OCI-LY7 (cell line): ENCODE measurements at regions of chr11 and their contacts with region 1.

Region 1: DNA sequence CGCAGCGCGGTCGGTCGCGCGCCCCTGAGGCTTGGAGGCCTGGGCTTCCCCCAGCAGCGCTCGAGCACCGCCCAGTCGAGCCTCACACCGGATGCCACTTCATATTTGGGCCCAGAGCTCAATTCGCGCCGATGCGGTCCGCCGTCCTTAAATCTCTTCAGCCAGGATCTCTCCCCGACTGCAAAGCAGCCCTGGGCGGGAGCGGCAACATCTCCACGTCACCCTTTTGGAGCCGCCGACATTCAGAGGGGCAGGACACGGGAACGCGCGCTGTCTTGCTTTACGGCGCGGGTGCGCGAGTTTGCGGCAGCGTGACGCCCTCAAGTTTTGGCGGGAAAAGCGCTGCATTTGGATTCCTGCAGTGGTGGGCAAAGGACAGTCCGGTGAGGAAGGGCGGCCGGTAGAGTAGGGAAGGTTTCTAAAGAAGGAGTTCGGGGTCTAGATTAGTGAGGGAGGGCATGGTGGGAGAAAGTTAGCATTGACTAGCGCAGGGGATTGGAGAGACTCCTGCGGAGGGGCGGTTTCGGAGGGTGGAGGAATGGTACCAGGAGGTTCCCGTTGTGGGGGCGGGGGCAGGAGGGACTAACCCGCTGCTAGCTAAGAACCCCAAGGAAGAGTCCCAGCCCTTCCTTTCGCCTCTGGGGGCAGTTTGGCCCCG is 796 bp downstream of the CHEK1 start:
- DNase-seq: peak; percentile 94
- H3K4me3 ChIP-seq: peak overlapping the region; percentile 89
- H3K27ac ChIP-seq: peak overlapping the region; percentile 88
- H3K4me1 ChIP-seq: peaks cover 33% of the 10 kb centered on the region
- CTCF ChIP-seq: no peak

Region 2: GRCh38 chr11:125451400-125452124 is 174.2 kb before region 1 on chr11:
- CTCF ChIA-PET with region 1: no interaction called
- POLR2A ChIA-PET with region 1: no interaction called
- intact Hi-C with region 1: no loop called
- DNase-seq: no peak
- H3K4me3 ChIP-seq: no peak overlapping the region
- H3K27ac ChIP-seq: no peak overlapping the region
- H3K4me1 ChIP-seq: no peaks in the 10 kb centered on the region
- CTCF ChIP-seq: no peak

Region 3: GRCh38 chr11:125568970-125569914 is 56.5 kb before region 1 on chr11 and contains the start of gene EI24:
- CTCF ChIA-PET with region 1: interaction called, 3 read pairs
- POLR2A ChIA-PET with region 1: interaction called, 8 read pairs
- intact Hi-C with region 1: loop called (anchors 2 kb)
- DNase-seq: peak; percentile 93
- H3K4me3 ChIP-seq: peak within 1 kb of the TSS; percentile 98
- H3K27ac ChIP-seq: peak within 1 kb of the TSS; percentile 55
- H3K4me1 ChIP-seq: peaks cover 20% of the 10 kb centered on the region
- CTCF ChIP-seq: peak; percentile 64
- total RNA-seq, gene EI24: 66.8 and 77.4 TPM in 2 replicates

Region 4: GRCh38 chr11:125592305-125593112 is 33.2 kb before region 1 on chr11 and contains the start of gene STT3A:
- CTCF ChIA-PET with region 1: no interaction called
- POLR2A ChIA-PET with region 1: interaction called, 34 read pairs
- intact Hi-C with region 1: loop called (anchors 2 kb)
- DNase-seq: peak; percentile 99
- H3K4me3 ChIP-seq: peak within 1 kb of the TSS; percentile 90
- H3K27ac ChIP-seq: peak within 1 kb of the TSS; percentile 78
- H3K4me1 ChIP-seq: peaks cover 25% of the 10 kb centered on the region
- CTCF ChIP-seq: no peak
- total RNA-seq, gene STT3A: 60.6 and 87.9 TPM in 2 replicates

Region 5: DNA sequence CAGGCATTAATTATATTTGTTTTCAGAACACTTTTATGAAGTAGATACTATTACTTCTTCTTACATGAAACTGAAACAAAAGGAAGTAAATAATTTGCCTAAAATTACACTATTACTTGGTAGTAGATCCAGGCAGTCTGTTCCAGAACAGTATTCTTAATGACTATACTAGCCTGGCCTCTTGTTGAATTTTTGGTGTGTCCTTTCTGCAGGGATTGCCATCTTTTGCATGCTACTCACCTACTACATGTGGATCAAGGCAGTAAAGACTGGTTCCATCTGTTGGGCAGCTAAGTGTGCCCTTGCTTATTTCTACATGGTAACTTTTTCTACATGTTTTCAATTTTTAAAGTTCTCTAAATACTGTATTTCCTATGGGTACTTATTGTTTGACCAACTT is 20.3 kb before region 1 on chr11:
- CTCF ChIA-PET with region 1: no interaction called
- POLR2A ChIA-PET with region 1: no interaction called
- intact Hi-C with region 1: loop called (anchors 2 kb)
- DNase-seq: no peak
- H3K4me3 ChIP-seq: no peak overlapping the region
- H3K27ac ChIP-seq: no peak overlapping the region
- H3K4me1 ChIP-seq: no peaks in the 10 kb centered on the region
- CTCF ChIP-seq: no peak

Region 6: DNA sequence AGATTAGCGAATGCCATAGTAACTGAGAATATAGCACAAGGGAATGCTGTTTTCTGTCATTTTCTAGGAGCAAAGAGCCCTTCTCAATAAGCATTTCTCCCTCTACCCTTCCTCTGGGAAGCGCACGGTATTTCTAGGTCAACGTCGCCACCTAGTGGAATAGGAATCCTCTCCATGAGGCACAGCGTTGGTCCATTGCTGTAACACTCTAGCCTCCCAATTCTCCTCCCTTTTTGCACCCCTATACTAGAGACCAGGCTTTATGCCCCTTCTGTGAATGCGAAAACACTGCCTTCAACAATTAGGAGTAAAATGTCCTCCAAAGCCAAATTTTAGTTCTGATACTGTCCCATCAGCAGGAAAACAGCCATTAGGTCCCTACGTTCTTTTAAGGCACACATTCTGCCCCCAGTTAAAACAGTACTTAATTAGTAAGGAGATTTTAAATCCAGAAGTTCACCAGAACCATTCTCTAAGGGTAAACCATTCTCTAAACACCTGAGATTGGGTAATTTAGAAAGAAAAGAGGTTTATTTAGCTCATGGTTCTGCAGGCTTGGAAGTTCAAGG is 248.9 kb after region 1 on chr11:
- CTCF ChIA-PET with region 1: no interaction called
- POLR2A ChIA-PET with region 1: no interaction called
- intact Hi-C with region 1: loop called (anchors 1 kb)
- DNase-seq: peak; percentile 61
- H3K4me3 ChIP-seq: no peak overlapping the region
- H3K27ac ChIP-seq: no peak overlapping the region
- H3K4me1 ChIP-seq: peaks cover 3% of the 10 kb centered on the region
- CTCF ChIP-seq: peak; percentile 81

Region 7: GRCh38 chr11:125887373-125888324 is 261.9 kb after region 1 on chr11 and contains the start of gene HYLS1:
- CTCF ChIA-PET with region 1: interaction called, 3 read pairs
- POLR2A ChIA-PET with region 1: interaction called, 8 read pairs
- intact Hi-C with region 1: loop called (anchors 5 kb)
- DNase-seq: peak; percentile 98
- H3K4me3 ChIP-seq: peak within 1 kb of the TSS; percentile 83
- H3K27ac ChIP-seq: peak within 1 kb of the TSS; percentile 87
- H3K4me1 ChIP-seq: peaks cover 47% of the 10 kb centered on the region
- CTCF ChIP-seq: peak; percentile 57
- total RNA-seq, gene HYLS1: 25.1 and 31.5 TPM in 2 replicates